ENCODE measurements at regions of chr12 and their contacts with region 1.

Region 1: GRCh38 chr12:48001505-48002413 is 2.5 kb downstream of the COL2A1 start:
- DNase-seq: peak; percentile 24
- H3K4me3 Mint-ChIP-seq: peak overlapping the region; percentile 61
- H3K27ac Mint-ChIP-seq: no peak overlapping the region
- H3K4me1 Mint-ChIP-seq: peaks cover 36% of the 10 kb centered on the region
- H3K27me3 Mint-ChIP-seq: peaks cover 78% of the 10 kb centered on the region

Region 2: DNA sequence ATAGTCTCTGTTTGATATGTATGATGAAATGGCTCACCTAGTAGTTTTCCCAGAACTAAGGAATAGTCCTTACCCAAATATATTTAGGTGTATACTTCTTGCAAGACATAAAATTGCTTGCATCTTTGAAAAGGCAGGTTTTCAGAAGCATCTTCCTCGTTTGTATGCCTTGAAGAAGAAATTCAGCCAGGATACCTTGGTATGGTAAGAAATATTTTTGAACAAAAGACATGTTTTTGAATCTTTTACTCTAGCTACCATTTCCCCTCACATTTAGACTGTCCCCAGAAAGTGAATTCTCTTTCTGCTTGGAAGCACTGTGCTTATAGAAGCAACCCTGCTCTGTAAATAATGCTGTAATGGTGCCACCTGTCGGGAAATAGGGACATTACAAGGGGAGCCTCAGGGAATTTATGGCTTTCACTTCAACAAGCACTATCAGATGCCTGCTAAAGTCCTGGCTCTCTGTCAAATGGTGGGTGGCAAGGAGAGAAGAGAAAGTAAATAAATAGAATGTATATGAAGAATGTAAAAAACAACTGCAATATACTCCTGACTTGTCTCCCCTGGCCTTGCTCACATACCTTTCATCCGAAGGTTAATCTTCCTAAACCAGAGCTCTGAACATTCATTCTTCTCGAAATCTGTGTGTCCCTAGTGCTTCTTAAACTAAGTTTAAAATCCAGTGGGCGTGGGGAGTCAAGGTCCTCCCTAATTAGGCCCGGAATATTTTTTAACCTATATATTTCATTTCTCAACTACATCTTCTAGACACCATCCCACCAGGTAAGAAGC is 187.8 kb after region 1 on chr12:
- CTCF ChIA-PET with region 1: interaction called, 7 read pairs
- POLR2A ChIA-PET with region 1: no interaction called
- intact Hi-C with region 1: loop called (anchors 5 kb)
- DNase-seq: peak; percentile 79
- H3K4me3 Mint-ChIP-seq: no peak overlapping the region
- H3K27ac Mint-ChIP-seq: no peak overlapping the region
- H3K4me1 Mint-ChIP-seq: peaks cover 5% of the 10 kb centered on the region
- H3K27me3 Mint-ChIP-seq: peaks cover 26% of the 10 kb centered on the region

Region 3: GRCh38 chr12:48237162-48237561 is 235.4 kb after region 1 on chr12:
- CTCF ChIA-PET with region 1: no interaction called
- POLR2A ChIA-PET with region 1: no interaction called
- intact Hi-C with region 1: no loop called
- DNase-seq: no peak
- H3K4me3 Mint-ChIP-seq: no peak overlapping the region
- H3K27ac Mint-ChIP-seq: no peak overlapping the region
- H3K4me1 Mint-ChIP-seq: no peaks in the 10 kb centered on the region
- H3K27me3 Mint-ChIP-seq: no peaks in the 10 kb centered on the region